ENCODE measurements at regions of chr2 and their contacts with region 1.

Region 1: GRCh38 chr2:219530048-219530963 is 13.3 kb downstream of the CHPF start:
- DNase-seq: peak; percentile 77 to 91
- ATAC-seq: peak; percentile 81 to 98 (median 96)
- H3K4me3 ChIP-seq: no peak overlapping the region
- H3K4me3 Mint-ChIP-seq: no peak overlapping the region
- H3K27ac ChIP-seq: no peak overlapping the region
- H3K27ac Mint-ChIP-seq: no peak overlapping the region
- H3K4me1 ChIP-seq: no peaks in the 10 kb centered on the region
- H3K4me1 Mint-ChIP-seq: peaks cover 0 to 12% of the 10 kb centered on the region in 2 donors
- H3K27me3 ChIP-seq: peaks cover 19% of the 10 kb centered on the region
- H3K27me3 Mint-ChIP-seq: peaks cover 45 to 50% of the 10 kb centered on the region in 2 donors
- CTCF ChIP-seq: peak; percentile 91

Region 2: GRCh38 chr2:219402665-219403515 is 127.4 kb before region 1 on chr2:
- intact Hi-C with region 1: loop called (anchors 1 kb)
- DNase-seq: peak in 1 of 2 donors; percentile 81
- ATAC-seq: peak; percentile 75 to 99 (median 96)
- H3K4me3 ChIP-seq: no peak overlapping the region
- H3K4me3 Mint-ChIP-seq: no peak overlapping the region
- H3K27ac ChIP-seq: no peak overlapping the region
- H3K27ac Mint-ChIP-seq: no peak overlapping the region
- H3K4me1 ChIP-seq: no peaks in the 10 kb centered on the region
- H3K4me1 Mint-ChIP-seq: peaks cover 0 to 11% of the 10 kb centered on the region in 2 donors
- H3K27me3 ChIP-seq: no peaks in the 10 kb centered on the region
- H3K27me3 Mint-ChIP-seq: peaks cover 19 to 21% of the 10 kb centered on the region in 2 donors
- CTCF ChIP-seq: peak; percentile 82

Region 3: DNA sequence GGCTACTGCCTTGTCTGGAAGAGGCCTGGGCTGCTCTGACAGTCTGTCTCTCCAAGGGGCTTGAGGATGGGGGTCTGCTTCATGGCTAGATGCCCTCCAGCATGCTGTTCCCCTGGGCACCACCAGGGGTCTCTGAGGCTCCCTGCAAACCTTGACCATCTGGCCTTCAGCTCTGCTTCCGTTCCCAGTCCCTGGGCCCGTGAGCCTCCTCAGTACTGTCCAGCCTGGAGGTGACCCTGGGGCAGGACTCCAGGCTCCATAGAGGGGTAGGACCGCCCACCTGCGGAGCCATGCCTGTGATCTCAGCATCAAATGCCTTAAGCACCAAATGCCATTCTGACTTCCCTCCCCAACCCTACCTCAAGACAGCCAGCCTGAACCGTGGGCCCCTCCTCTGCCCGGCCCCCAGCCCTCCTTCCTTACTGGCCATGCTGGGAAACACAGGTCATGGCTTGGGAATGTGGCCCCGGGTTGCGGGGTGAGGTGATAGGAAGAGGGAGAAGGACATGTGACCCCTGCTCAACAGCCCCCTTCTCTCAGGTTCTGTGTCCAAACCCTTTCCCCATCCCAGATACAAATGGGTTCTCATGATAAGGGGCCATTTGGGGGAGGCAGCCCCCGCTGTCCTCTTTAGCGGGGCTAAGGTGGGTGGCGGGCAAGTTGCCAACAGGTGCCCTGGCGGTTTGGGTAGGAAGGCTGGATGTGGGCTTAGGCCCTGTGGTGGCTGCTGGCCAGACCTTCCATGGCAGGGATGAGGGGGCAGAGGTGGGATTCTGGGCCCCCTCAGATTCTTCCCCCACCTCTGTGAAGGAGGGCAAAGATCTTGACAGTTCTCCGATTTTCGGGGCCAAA is 70.6 kb before region 1 on chr2:
- intact Hi-C with region 1: loop called (anchors 1 kb)
- DNase-seq: peak; percentile 33 to 62
- ATAC-seq: peak; percentile 45 to 75 (median 52)
- H3K4me3 ChIP-seq: no peak overlapping the region
- H3K4me3 Mint-ChIP-seq: no peak overlapping the region
- H3K27ac ChIP-seq: no peak overlapping the region
- H3K27ac Mint-ChIP-seq: no peak overlapping the region
- H3K4me1 ChIP-seq: no peaks in the 10 kb centered on the region
- H3K4me1 Mint-ChIP-seq: no peaks in the 10 kb centered on the region
- H3K27me3 ChIP-seq: no peaks in the 10 kb centered on the region
- H3K27me3 Mint-ChIP-seq: peaks cover 0 to 3% of the 10 kb centered on the region in 2 donors
- CTCF ChIP-seq: peak; percentile 79

Region 4: DNA sequence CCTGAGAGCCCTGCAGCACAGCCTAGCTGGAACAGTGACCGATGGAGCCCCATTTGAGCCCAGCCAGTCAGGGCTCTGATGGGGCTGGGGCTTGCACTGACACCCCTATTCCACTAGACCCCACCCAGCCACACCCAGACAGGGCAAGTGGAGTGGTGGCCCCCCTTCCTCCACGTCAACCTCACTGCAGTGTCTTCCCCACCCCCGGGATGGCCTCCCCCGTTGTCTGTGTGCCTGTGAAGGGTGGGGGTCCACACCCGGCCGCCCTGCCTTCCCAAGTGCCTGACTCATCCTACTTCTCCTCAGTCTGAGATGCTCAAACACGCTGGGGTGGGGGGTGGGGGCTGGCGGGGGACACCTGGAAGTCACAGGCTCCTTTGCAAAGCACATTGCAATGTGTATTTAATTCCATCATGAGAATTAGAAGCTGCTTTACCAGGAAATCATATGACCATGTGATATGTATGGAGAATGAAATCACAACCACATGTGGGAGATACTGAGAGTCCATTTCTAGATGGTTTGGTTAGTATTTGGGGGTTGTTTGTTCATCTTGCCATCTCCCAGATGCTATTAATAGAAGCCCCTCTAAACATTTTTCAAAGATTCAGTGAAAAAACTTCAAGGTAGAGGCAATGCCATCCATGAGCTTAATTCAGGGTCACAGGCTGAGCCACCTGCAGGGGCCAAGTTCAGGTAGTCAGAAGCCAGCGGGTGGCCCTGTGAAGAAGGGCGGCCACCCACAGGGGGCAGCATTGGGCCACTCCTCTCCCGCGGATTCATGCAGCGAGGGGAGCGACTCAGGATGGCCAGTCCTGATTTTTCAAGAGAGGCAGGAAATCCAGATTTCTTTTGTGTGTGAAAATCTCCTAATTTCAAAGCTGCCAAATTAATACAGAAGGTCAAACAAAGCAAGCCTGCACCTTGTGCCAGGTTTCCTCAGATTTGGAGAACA is 54.3 kb before region 1 on chr2:
- intact Hi-C with region 1: loop called (anchors 5 kb)
- DNase-seq: peak; percentile 31 to 70
- ATAC-seq: peak in 2 of 3 donors; percentile 60 to 78
- H3K4me3 ChIP-seq: no peak overlapping the region
- H3K4me3 Mint-ChIP-seq: no peak overlapping the region
- H3K27ac ChIP-seq: no peak overlapping the region
- H3K27ac Mint-ChIP-seq: no peak overlapping the region
- H3K4me1 ChIP-seq: peaks cover 3% of the 10 kb centered on the region
- H3K4me1 Mint-ChIP-seq: peaks cover 5% of the 10 kb centered on the region in 2 donors
- H3K27me3 ChIP-seq: no peaks in the 10 kb centered on the region
- H3K27me3 Mint-ChIP-seq: peaks cover 6 to 8% of the 10 kb centered on the region in 2 donors
- CTCF ChIP-seq: peak; percentile 61

Region 5: GRCh38 chr2:219498280-219499057 is 31.8 kb before region 1 on chr2 and contains the start of gene GMPPA:
- intact Hi-C with region 1: loop called (anchors 5 kb)
- DNase-seq: peak; percentile 73 to 95
- ATAC-seq: peak; percentile 88 to 92 (median 90)
- H3K4me3 ChIP-seq: peak within 1 kb of the TSS; percentile 80
- H3K4me3 Mint-ChIP-seq: peak within 1 kb of the TSS; percentile 94
- H3K27ac ChIP-seq: peak within 1 kb of the TSS; percentile 59
- H3K27ac Mint-ChIP-seq: peak within 1 kb of the TSS; percentile 84 to 90
- H3K4me1 ChIP-seq: peaks cover 31% of the 10 kb centered on the region
- H3K4me1 Mint-ChIP-seq: peaks cover 26 to 48% of the 10 kb centered on the region in 2 donors
- H3K27me3 ChIP-seq: peaks cover 35% of the 10 kb centered on the region
- H3K27me3 Mint-ChIP-seq: peaks cover 7 to 22% of the 10 kb centered on the region in 2 donors
- CTCF ChIP-seq: no peak
- total RNA-seq, gene GMPPA: 27.6 to 36.3 (median 33.8) TPM

Region 6: DNA sequence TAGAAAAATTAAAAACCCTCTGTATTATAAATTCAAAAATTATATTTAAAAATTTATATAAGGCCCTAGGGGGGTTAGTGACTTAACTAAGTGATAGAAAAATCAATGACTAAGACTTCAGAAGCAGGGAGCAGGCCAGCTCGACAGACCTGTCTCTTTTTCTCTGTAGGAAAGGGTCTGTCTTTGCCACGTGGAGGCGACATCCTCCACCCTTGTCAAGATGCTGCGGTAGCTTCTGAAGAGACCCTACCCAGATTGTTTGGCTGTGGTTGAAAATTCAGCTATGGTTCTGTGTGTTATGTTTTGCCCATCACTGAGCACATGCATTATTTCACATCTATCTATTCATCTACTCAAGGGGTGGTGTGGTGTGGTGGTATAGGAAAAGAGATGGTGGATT is 88.9 kb after region 1 on chr2:
- intact Hi-C with region 1: no loop called
- DNase-seq: no peak
- ATAC-seq: no peak
- H3K4me3 ChIP-seq: no peak overlapping the region
- H3K4me3 Mint-ChIP-seq: no peak overlapping the region
- H3K27ac ChIP-seq: no peak overlapping the region
- H3K27ac Mint-ChIP-seq: no peak overlapping the region
- H3K4me1 ChIP-seq: no peaks in the 10 kb centered on the region
- H3K4me1 Mint-ChIP-seq: peaks cover 0 to 3% of the 10 kb centered on the region in 2 donors
- H3K27me3 ChIP-seq: no peaks in the 10 kb centered on the region
- H3K27me3 Mint-ChIP-seq: peaks cover 0 to 5% of the 10 kb centered on the region in 2 donors
- CTCF ChIP-seq: no peak